ENCODE measurements at regions of chr3 and their contacts with region 1.

Region 1: GRCh38 chr3:188749010-188749617 is 422.7 kb upstream of the TPRG1 start:
- DNase-seq: peak; percentile 55 to 63 (median 59)
- H3K4me3 ChIP-seq: no peak overlapping the region
- H3K4me3 Mint-ChIP-seq: no peak overlapping the region
- H3K27ac ChIP-seq: no peak overlapping the region
- H3K27ac Mint-ChIP-seq: no peak overlapping the region
- H3K4me1 ChIP-seq: no peaks in the 10 kb centered on the region
- H3K4me1 Mint-ChIP-seq: peaks cover 0 to 5% (median 0%) of the 10 kb centered on the region in 4 donors
- H3K27me3 ChIP-seq: no peaks in the 10 kb centered on the region
- H3K27me3 Mint-ChIP-seq: no peaks in the 10 kb centered on the region

Region 2: GRCh38 chr3:188706176-188706575 is 42.9 kb before region 1 on chr3:
- CTCF ChIA-PET with region 1: interaction called, 11 read pairs
- POLR2A ChIA-PET with region 1: no interaction called
- intact Hi-C with region 1: no loop called
- DNase-seq: no peak
- H3K4me3 ChIP-seq: no peak overlapping the region
- H3K4me3 Mint-ChIP-seq: no peak overlapping the region
- H3K27ac ChIP-seq: no peak overlapping the region
- H3K27ac Mint-ChIP-seq: no peak overlapping the region
- H3K4me1 ChIP-seq: no peaks in the 10 kb centered on the region
- H3K4me1 Mint-ChIP-seq: peaks cover 7 to 16% (median 8%) of the 10 kb centered on the region in 4 donors
- H3K27me3 ChIP-seq: no peaks in the 10 kb centered on the region
- H3K27me3 Mint-ChIP-seq: no peaks in the 10 kb centered on the region

Region 3: GRCh38 chr3:188760408-188760807 is 11.3 kb after region 1 on chr3:
- CTCF ChIA-PET with region 1: interaction called, 12 read pairs
- POLR2A ChIA-PET with region 1: no interaction called
- intact Hi-C with region 1: no loop called
- DNase-seq: no peak
- H3K4me3 ChIP-seq: no peak overlapping the region
- H3K4me3 Mint-ChIP-seq: no peak overlapping the region
- H3K27ac ChIP-seq: no peak overlapping the region
- H3K27ac Mint-ChIP-seq: peak overlapping the region in 1 of 7 donors; percentile 25
- H3K4me1 ChIP-seq: no peaks in the 10 kb centered on the region
- H3K4me1 Mint-ChIP-seq: peaks cover 0 to 7% (median 3%) of the 10 kb centered on the region in 4 donors
- H3K27me3 ChIP-seq: no peaks in the 10 kb centered on the region
- H3K27me3 Mint-ChIP-seq: no peaks in the 10 kb centered on the region

Region 4: GRCh38 chr3:189142527-189142926 is 393.4 kb after region 1 on chr3:
- CTCF ChIA-PET with region 1: interaction called, 18 read pairs
- POLR2A ChIA-PET with region 1: no interaction called
- intact Hi-C with region 1: loop called (anchors 1 kb)
- DNase-seq: peak in 4 of 5 donors; percentile 6 to 66 (median 22)
- H3K4me3 ChIP-seq: no peak overlapping the region
- H3K4me3 Mint-ChIP-seq: peak overlapping the region in 4 of 8 donors; percentile 8 to 24 (median 15)
- H3K27ac ChIP-seq: no peak overlapping the region
- H3K27ac Mint-ChIP-seq: peak overlapping the region in 5 of 7 donors; percentile 33 to 77 (median 61)
- H3K4me1 ChIP-seq: peaks cover 28% of the 10 kb centered on the region
- H3K4me1 Mint-ChIP-seq: peaks cover 17 to 43% (median 24%) of the 10 kb centered on the region in 4 donors
- H3K27me3 ChIP-seq: no peaks in the 10 kb centered on the region
- H3K27me3 Mint-ChIP-seq: no peaks in the 10 kb centered on the region

Measured in CD4-positive, alpha-beta memory T cell (primary cell).